Activated T-helper 1 cell treated with anti-CD3 and anti-CD28 coated beads, Interleukin-12 subunit alpha, Interleukin-12 subunit beta, Interleukin-2, Interleukin-4 antibody, amounts not matched to agents 30 ng/mL and 10 ng/mL and 1 ng/mL, durations not matched to agents 14 hours and 24 hours and 36 hours (primary cell): ENCODE measurements at regions of chr4 and their contacts with region 1.

Region 1: GRCh38 chr4:80202190-80202711 is 4.9 kb downstream of the PRDM8 start:
- DNase-seq: peak; percentile 79
- H3K4me3 Mint-ChIP-seq: peak overlapping the region; percentile 80
- H3K27ac Mint-ChIP-seq: peak overlapping the region; percentile 73
- H3K4me1 Mint-ChIP-seq: peaks cover 29% of the 10 kb centered on the region
- H3K27me3 Mint-ChIP-seq: peaks cover 21% of the 10 kb centered on the region

Region 2: DNA sequence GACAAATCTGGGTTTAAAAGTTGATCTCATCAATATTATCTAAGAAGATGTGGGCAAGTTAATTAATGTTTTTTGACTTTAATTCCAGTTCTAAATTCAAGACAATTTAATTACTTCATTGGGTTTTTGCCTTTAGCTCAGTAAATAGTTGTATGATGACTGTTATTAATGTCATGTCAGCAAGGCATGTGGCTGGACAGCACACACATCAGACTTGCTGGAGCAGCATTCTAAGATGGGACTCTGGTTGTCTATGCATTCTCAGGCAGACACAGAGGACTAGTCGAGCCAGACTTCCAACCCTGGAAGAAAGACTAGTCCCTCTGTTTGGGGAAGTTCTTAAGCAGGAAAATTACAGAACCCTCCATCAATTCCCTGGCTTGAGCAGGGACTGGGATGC is 613.6 kb before region 1 on chr4:
- intact Hi-C with region 1: no loop called
- DNase-seq: no peak
- H3K4me3 Mint-ChIP-seq: no peak overlapping the region
- H3K27ac Mint-ChIP-seq: no peak overlapping the region
- H3K4me1 Mint-ChIP-seq: no peaks in the 10 kb centered on the region
- H3K27me3 Mint-ChIP-seq: no peaks in the 10 kb centered on the region

Region 3: DNA sequence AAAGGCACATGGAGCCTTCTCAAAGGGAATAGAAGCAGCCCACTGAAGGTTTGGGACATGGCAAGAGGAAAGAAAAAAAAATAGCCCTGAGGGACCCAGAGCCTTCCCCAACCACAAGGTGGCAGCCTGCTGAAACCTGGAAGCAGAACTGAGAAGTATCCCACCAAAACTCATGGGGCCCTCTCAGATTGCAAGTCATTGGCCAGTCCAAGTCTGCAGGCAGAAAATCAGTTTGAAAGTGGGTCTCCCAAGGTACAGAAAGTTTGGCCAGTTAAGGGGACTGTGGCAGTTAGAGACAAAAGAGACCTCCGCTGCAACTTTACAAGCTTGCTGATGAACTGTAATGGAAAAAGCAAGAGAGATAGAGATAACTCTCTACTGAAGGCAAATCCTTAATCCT is 285.0 kb before region 1 on chr4:
- intact Hi-C with region 1: loop called (anchors 1 kb)
- DNase-seq: peak; percentile 25
- H3K4me3 Mint-ChIP-seq: no peak overlapping the region
- H3K27ac Mint-ChIP-seq: no peak overlapping the region
- H3K4me1 Mint-ChIP-seq: peaks cover 36% of the 10 kb centered on the region
- H3K27me3 Mint-ChIP-seq: no peaks in the 10 kb centered on the region

Region 4: DNA sequence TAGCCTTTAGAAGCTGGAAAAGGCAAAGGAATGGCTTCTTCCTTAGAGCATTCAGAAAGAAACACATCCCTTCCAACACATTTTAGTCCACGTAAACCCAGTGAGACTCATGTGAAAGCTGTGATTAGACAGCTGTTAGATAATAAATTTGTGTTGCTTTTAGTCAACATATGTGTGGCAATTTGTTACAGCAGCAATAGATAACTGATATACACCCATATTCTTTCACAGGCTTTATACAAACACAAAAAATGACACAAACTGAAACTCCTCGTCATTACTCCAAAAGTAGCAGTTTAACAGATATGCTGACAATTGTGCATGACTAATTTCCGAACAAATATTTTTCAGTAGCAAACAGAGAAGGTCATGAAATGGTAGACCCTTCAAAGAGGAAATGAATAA is 194.5 kb before region 1 on chr4:
- intact Hi-C with region 1: loop called (anchors 2 kb)
- DNase-seq: no peak
- H3K4me3 Mint-ChIP-seq: peak overlapping the region; percentile 41
- H3K27ac Mint-ChIP-seq: peak overlapping the region; percentile 88
- H3K4me1 Mint-ChIP-seq: peaks cover 74% of the 10 kb centered on the region
- H3K27me3 Mint-ChIP-seq: no peaks in the 10 kb centered on the region